GM10248 (cell line): ENCODE measurements at regions of chr1 and their contacts with region 1.

Region 1: GRCh38 chr1:21368515-21369289 is 71.2 kb upstream of the NBPF3 start:
- DNase-seq: peak; percentile 64
- CTCF ChIP-seq: peak; percentile 97

Region 2: GRCh38 chr1:21232044-21232443 is 136.7 kb before region 1 on chr1:
- CTCF ChIA-PET with region 1: interaction called, 170 read pairs
- POLR2A ChIA-PET with region 1: no interaction called
- DNase-seq: peak; percentile 62
- CTCF ChIP-seq: peak; percentile 60

Region 3: GRCh38 chr1:21255278-21255942 is 113.3 kb before region 1 on chr1:
- CTCF ChIA-PET with region 1: interaction called, 313 read pairs
- POLR2A ChIA-PET with region 1: no interaction called
- DNase-seq: peak; percentile 81
- CTCF ChIP-seq: peak; percentile 92

Region 4: DNA sequence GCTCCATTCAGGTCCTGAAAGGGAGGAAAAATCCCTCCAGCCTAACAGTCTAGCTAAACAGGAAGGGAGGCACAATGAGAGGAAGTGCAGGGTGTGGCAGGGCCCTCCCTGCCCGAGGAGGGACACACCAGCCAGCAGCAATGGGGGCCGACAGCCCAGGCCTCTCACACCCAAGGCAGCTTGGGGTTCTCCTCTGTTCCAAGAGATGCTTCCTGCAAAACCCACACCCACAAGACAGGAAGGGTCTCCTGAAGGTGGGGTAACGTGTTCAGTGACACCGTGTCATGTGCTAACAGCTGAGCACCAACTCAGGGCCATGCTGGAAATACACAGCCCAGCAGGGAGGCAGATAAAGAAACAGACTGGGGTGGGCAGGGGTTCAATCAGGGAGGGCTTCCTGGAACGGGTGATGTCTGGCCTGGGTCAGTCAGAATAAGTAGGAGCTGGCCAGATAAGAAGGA is 88.7 kb before region 1 on chr1:
- CTCF ChIA-PET with region 1: interaction called, 10 read pairs
- POLR2A ChIA-PET with region 1: no interaction called
- DNase-seq: no peak
- CTCF ChIP-seq: no peak

Region 5: GRCh38 chr1:21344750-21345443 is 23.8 kb before region 1 on chr1:
- CTCF ChIA-PET with region 1: interaction called, 10 read pairs
- POLR2A ChIA-PET with region 1: no interaction called
- DNase-seq: no peak
- CTCF ChIP-seq: no peak

Region 6: DNA sequence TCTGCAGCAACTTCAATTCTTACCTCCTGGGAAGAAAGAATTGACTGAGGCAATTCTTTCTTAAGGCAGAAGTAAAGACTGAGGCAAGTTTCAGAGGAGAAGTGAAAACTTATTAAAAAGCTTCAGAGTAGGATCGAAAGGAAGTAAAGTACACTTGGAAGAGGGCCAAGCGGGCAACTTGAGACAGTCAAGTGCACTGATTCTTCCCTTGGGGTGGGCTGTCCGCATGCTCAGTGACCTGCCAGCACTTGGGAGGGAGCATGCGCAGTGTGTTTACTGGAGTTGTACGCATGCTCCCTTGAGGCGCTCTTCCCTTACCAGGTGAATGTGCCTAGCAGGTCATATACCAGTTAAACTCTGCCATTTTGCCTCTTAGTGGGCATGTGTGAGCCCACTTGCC is 15.9 kb after region 1 on chr1:
- CTCF ChIA-PET with region 1: interaction called, 23 read pairs
- POLR2A ChIA-PET with region 1: no interaction called
- DNase-seq: no peak
- CTCF ChIP-seq: no peak